ENCODE measurements at regions of chr1 and their contacts with region 1.

Region 1: GRCh38 chr1:40820251-40820797 is 36.7 kb downstream of the KCNQ4 start:
- DNase-seq: no peak
- ATAC-seq: peak; percentile 58
- H3K4me3 ChIP-seq: no peak overlapping the region
- H3K27ac ChIP-seq: peak overlapping the region; percentile 31 to 75
- H3K4me1 ChIP-seq: no peaks in the 10 kb centered on the region
- H3K27me3 ChIP-seq: no peaks in the 10 kb centered on the region

Region 2: DNA sequence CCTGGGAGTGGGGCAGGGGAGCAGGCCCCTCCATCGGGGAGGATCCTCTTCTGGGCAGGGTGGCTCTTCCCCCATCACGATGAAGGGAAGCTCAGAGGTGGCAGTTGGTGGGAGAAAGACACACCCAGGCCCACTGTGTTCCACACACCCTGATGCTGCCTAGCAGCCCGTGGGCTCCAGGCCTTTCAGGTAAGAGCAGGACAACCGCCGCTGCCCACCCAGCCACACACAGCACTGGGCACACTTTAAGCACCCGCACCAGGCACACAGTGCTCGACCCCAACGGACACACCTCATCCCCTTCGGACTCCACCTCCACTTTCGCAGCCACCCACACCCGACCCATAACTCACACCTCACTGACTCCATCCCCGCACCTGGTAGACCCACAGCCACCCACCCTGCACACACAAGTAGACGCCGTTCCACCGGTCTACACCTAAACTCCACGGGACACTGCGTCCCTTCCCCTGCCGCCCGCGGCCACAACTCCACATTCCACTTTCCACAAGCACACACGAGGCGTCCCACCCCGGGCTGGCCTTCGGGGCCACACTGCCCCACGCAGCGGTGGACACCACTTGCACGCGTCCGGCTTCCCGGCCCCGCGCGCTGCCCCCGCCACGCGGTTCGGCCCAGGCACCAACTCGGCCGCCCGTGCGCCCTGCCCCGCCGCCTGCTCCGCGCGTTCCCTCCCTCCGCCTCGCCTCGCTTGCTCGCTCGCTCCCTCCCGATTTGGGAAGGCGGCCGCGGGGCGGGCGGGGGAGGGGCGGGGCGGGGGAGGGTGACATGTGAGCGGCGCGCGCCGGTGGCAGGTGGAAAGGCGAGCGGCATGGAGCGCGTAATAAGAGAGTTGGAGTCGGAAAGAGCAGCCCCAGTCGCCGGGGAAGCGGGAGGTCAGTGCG is 37.1 kb before region 1 on chr1 and contains the start of gene KCNQ4:
- intact Hi-C with region 1: loop called in 1 of 2 experiments (anchors 5 kb)
- DNase-seq: peak; percentile 69 to 90
- ATAC-seq: peak; percentile 59
- H3K4me3 ChIP-seq: peak within 1 kb of the TSS; percentile 58 to 76
- H3K27ac ChIP-seq: peak within 1 kb of the TSS; percentile 31 to 61
- H3K4me1 ChIP-seq: peaks cover 0 to 1% of the 10 kb centered on the region in 2 donors
- H3K27me3 ChIP-seq: no peaks in the 10 kb centered on the region
- total RNA-seq, gene KCNQ4: 7.2 to 8.7 TPM

Region 3: DNA sequence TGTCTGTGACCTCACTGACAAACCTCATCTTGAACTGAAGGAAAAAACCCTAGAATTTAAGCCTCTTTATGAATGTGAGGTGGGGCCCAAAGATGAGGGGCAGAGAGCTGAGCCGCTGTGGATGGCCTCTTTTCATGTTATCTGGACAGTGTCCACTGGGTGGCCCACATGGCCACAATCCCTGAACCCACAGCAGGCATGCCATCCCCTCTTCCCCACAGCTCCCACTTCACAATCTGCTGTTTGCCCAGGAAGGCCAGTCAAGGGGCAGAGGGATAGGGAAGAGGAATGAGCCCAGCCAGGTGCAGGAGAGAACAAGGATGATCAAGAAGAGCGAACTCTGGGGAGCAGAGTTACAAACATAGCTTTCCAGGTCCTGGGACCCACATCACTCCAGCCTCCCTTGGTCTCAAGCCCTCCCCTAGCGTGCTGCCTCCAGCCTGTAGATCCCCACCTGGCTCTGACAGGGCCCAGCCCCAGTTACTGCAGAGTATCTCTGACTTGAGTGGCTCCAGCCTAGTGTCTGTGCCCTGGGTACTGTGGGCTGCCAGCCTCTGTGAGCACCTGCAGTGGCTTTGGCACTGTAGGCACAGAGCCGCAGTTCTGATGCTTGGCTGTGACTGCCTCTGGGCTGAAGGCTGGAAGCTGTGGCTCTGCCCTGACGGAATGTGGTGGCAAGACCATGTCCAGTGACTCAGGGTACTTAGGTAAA is 203.1 kb after region 1 on chr1:
- intact Hi-C with region 1: no loop called
- DNase-seq: no peak
- ATAC-seq: no peak
- H3K4me3 ChIP-seq: no peak overlapping the region
- H3K27ac ChIP-seq: no peak overlapping the region
- H3K4me1 ChIP-seq: no peaks in the 10 kb centered on the region
- H3K27me3 ChIP-seq: no peaks in the 10 kb centered on the region

Region 4: GRCh38 chr1:42035830-42036604 is 1215.7 kb after region 1 on chr1:
- intact Hi-C with region 1: no loop called
- DNase-seq: peak; percentile 98 to 99
- ATAC-seq: peak; percentile 97
- H3K4me3 ChIP-seq: peak overlapping the region; percentile 69 to 92
- H3K27ac ChIP-seq: no peak overlapping the region
- H3K4me1 ChIP-seq: peaks cover 0 to 4% of the 10 kb centered on the region in 2 donors
- H3K27me3 ChIP-seq: no peaks in the 10 kb centered on the region